ENCODE measurements at regions of chr3 and their contacts with region 1.

Region 1: GRCh38 chr3:51391075-51391567 is at the start of gene RBM15B:
- DNase-seq: peak; percentile 77
- H3K4me3 ChIP-seq: peak within 1 kb of the TSS; percentile 58 to 69 (median 62)
- H3K27ac ChIP-seq: peak within 1 kb of the TSS; percentile 70
- H3K4me1 ChIP-seq: peaks cover 45% of the 10 kb centered on the region
- H3K27me3 ChIP-seq: no peaks in the 10 kb centered on the region
- CTCF ChIP-seq: peak in 2 of 3 experiments; percentile 69 to 96
- polyA plus RNA-seq, gene RBM15B: 10.1 to 17.4 TPM (median 10.2 TPM) in 3 replicates

Region 2: GRCh38 chr3:50611464-50612233 is 779.5 kb before region 1 on chr3 and contains the start of gene CISH:
- dilution Hi-C with region 1: loop called (anchors 25 kb)
- DNase-seq: no peak
- H3K4me3 ChIP-seq: peak within 1 kb of the TSS; percentile 65 to 81 (median 70)
- H3K27ac ChIP-seq: peak within 1 kb of the TSS; percentile 16
- H3K4me1 ChIP-seq: peaks cover 30% of the 10 kb centered on the region
- H3K27me3 ChIP-seq: no peaks in the 10 kb centered on the region
- CTCF ChIP-seq: peak in 1 of 3 experiments; percentile 18
- polyA plus RNA-seq, gene CISH: 1.8 to 3.5 TPM (median 2.8 TPM) in 3 replicates